GM10248 (cell line): ENCODE measurements at regions of chr3 and their contacts with region 1.

Region 1: GRCh38 chr3:114307222-114307830 is 13.5 kb downstream of the TIGIT start:
- DNase-seq: no peak
- CTCF ChIP-seq: no peak

Region 2: DNA sequence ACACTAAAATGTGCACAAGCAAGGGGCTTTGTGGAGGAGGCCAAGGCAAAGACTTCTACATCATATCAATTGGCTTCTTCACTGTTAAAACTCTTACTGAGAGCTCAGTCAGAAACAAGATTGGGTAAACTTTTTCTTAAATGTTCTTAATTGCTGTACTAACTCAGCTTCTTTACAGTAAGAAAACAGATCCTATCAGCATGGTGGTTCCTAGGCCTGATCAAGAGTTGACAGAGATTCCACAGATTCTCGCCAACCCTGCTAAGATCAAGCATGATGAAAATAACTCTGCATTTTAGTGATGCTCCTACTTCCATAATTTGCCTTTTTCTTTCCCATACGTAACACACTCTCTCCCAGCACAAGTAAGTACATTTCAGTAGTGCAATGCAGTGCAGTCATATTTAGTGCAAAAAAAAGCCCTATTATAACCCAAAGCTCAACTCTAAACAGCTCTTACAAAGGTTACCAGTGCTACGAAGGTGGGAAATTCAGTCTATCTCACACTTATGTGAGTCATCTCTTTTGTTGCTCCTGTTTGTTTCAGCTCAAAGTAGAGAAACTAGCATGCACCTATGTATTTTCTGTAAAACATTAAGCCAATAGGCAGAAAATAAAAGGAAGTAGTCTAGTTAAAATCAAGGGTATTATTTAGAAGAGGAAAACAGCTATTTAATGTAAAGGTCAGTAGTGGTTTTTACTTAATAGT is 16.4 kb after region 1 on chr3:
- CTCF ChIA-PET with region 1: interaction called, 25 read pairs
- POLR2A ChIA-PET with region 1: no interaction called
- DNase-seq: no peak
- CTCF ChIP-seq: no peak

Region 3: GRCh38 chr3:114336122-114336697 is 28.9 kb after region 1 on chr3:
- CTCF ChIA-PET with region 1: interaction called, 14 read pairs
- POLR2A ChIA-PET with region 1: no interaction called
- DNase-seq: no peak
- CTCF ChIP-seq: peak; percentile 42

Region 4: GRCh38 chr3:114441386-114441785 is 134.1 kb after region 1 on chr3:
- CTCF ChIA-PET with region 1: no interaction called
- POLR2A ChIA-PET with region 1: no interaction called
- DNase-seq: no peak
- CTCF ChIP-seq: no peak